ENCODE measurements at regions of chr18 and their contacts with region 1.

Region 1: DNA sequence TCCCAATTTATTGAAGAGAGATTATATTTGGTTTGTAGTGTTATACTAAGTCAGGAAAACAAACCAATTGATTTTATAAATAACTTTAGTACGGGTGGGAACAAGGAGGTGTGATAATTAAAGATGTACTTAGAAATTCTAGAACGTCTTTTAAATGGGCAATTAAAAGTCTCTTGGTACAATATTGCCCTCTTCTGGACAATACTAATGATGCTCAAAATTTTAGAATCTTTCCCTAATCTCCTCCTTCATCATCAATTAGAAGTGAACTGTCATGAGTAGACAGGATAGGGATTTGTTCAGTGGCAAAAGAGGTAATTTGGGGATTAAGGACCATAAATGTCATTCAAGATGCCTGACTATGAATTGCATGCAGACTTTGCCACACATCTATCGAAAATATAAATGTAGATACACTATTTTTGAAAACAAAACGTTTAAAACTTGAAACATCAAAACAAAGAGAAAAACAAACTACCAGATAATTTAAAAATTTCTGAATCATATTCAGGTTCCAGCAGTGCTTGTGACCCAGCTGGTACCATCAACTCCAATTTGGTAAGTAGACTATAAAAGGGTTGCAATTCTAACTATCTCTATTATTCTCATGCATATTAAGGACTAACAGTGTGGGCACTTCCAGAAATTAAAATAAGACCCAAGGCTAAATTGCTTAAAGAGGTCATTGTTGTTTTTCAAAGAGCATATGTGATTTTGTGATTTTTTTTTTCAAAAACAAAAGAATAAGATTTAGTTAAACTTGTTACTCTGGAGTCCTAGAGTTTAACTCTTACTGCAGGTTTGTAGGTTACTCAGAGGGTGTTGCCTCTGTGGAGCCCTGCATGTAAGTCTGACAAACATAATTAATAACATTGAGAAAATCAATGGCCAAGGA is 123.5 kb downstream of the LAMA3 start:
- DNase-seq: peak; percentile 15
- ATAC-seq: peak; percentile 57
- H3K4me3 ChIP-seq: no peak overlapping the region
- H3K27ac ChIP-seq: no peak overlapping the region
- H3K4me1 ChIP-seq: no peaks in the 10 kb centered on the region
- H3K27me3 ChIP-seq: no peaks in the 10 kb centered on the region
- CTCF ChIP-seq: peak; percentile 33 to 65 (median 58); a peak in 5 of 6 replicates
- POLR2A ChIP-seq: no peak
- RAD21 ChIP-seq: peak; percentile 76

Region 2: DNA sequence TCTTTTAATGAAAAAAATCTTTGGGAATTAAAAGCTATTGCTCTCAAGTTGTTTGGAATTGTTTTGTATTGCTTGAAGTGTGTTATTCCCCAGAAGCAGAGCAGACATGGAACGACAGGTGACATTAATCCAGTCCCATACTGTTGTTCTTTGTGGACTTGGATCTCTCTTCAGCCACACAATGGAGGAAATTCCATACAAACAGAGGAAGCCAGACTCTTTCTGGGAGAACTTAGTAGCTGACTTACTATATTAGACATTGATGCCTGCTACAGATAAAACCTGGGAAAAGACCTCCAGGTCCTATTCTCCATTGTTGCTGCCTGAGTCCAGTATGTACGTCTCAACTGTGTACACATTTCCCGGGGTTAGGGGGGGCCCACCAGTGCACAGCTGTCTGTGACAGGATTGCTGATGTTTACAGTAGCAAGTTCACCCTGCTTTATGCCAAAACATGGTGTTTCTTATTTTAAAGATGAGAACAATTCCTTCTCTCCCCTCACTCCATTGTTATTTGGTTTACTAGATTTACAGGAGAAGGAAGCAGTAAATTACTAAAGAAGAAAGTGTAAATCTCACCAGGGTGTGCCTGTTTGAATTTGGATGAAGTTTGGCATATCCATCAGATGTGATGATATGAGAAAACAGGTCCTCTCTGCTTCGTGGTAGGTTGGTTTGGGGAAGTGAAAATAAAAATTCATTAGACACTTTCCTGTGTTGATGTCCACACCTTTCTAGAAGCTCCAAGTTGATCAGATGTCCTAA is 1022.1 kb before region 1 on chr18:
- CTCF ChIA-PET with region 1: no interaction called
- POLR2A ChIA-PET with region 1: no interaction called
- RAD21 ChIA-PET with region 1: no interaction called
- intact Hi-C with region 1: loop called (anchors 10 kb)
- DNase-seq: no peak
- ATAC-seq: no peak
- H3K4me3 ChIP-seq: no peak overlapping the region
- H3K27ac ChIP-seq: no peak overlapping the region
- H3K4me1 ChIP-seq: no peaks in the 10 kb centered on the region
- H3K27me3 ChIP-seq: no peaks in the 10 kb centered on the region
- CTCF ChIP-seq: no peak
- POLR2A ChIP-seq: no peak
- RAD21 ChIP-seq: no peak

Region 3: DNA sequence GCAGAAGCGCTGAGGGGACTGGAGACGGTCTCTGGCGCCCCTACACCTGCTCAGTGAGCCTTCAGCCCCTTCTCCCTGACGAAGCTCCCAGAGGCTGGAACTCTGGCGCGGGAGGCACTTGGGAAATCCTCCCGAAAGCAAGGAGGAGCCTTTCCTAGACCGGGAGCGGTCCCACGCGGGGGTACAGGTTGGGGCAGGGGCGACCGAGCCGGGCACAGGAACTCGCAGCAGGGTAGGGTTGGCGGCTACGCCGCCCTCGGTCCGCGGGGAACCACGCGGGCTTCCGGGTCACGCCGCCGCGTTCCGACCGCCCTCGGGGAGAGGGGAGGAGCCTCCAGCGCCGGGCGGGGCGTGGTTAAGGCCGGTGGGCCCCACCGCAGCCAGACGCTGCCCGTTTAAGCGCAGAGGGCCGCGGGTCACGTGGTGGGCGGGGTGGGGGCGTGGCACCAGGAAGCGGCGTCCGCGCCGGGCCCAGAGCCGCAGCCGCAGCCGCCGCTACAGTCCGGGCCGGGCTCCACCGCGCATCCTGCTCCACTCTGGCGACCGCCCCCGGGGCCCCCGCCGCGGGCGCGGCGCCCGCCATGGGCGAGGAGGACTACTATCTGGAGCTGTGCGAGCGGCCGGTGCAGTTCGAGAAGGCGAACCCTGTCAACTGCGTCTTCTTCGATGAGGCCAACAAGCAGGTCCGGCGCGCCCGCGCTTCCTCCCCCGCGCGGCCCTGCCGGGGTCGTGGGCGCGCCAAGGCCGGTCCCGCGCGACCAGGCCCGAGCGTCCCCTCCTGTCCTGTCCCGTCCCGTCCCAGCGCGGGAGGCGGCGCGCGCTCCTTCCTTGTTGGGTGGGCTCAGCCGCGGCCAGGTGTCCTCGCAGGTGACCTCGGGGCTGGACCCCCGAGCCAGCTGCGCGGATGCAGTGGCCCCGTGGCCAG is 309.5 kb before region 1 on chr18 and contains the start of gene RMC1:
- CTCF ChIA-PET with region 1: no interaction called
- POLR2A ChIA-PET with region 1: no interaction called
- RAD21 ChIA-PET with region 1: no interaction called
- intact Hi-C with region 1: loop called (anchors 1 kb)
- DNase-seq: peak; percentile 81
- ATAC-seq: peak; percentile 85
- H3K4me3 ChIP-seq: peak within 1 kb of the TSS; percentile 79 to 92
- H3K27ac ChIP-seq: peak within 1 kb of the TSS; percentile 70
- H3K4me1 ChIP-seq: peaks cover 10 to 33% of the 10 kb centered on the region in 2 experiments; a peak in 3 of 4 replicates
- H3K27me3 ChIP-seq: no peaks in the 10 kb centered on the region
- CTCF ChIP-seq: no peak
- POLR2A ChIP-seq: peak; percentile 76
- RAD21 ChIP-seq: peak; percentile 23; the same call in 1 of the 2 replicates
- total RNA-seq, gene RMC1: 38.4 TPM

Region 4: GRCh38 chr18:23515911-23516546 is 296.8 kb before region 1 on chr18:
- CTCF ChIA-PET with region 1: no interaction called
- POLR2A ChIA-PET with region 1: no interaction called
- RAD21 ChIA-PET with region 1: no interaction called
- intact Hi-C with region 1: loop called (anchors 5 kb)
- DNase-seq: peak; percentile 57
- ATAC-seq: peak; percentile 100
- H3K4me3 ChIP-seq: no peak overlapping the region
- H3K27ac ChIP-seq: no peak overlapping the region
- H3K4me1 ChIP-seq: 0 out of 4 replicates have a peak, but pooled peaks cover 0 to 2% of the 10 kb centered on the region in 2 experiments
- H3K27me3 ChIP-seq: no peaks in the 10 kb centered on the region
- CTCF ChIP-seq: peak; percentile 72 to 96 (median 96); a peak in 5 of 6 replicates
- POLR2A ChIP-seq: no peak
- RAD21 ChIP-seq: peak; percentile 78

Region 5: GRCh38 chr18:23619388-23619881 is 193.4 kb before region 1 on chr18:
- CTCF ChIA-PET with region 1: interaction called, 8 read pairs
- POLR2A ChIA-PET with region 1: no interaction called
- RAD21 ChIA-PET with region 1: no interaction called
- intact Hi-C with region 1: loop called (anchors 1 kb)
- DNase-seq: no peak
- ATAC-seq: no peak
- H3K4me3 ChIP-seq: no peak overlapping the region
- H3K27ac ChIP-seq: no peak overlapping the region
- H3K4me1 ChIP-seq: no peaks in the 10 kb centered on the region
- H3K27me3 ChIP-seq: no peaks in the 10 kb centered on the region
- CTCF ChIP-seq: no peak
- POLR2A ChIP-seq: no peak
- RAD21 ChIP-seq: no peak

Region 6: GRCh38 chr18:23833714-23834113 is 20.9 kb after region 1 on chr18:
- CTCF ChIA-PET with region 1: no interaction called
- POLR2A ChIA-PET with region 1: no interaction called
- RAD21 ChIA-PET with region 1: no interaction called
- intact Hi-C with region 1: loop called (anchors 2 kb)
- DNase-seq: no peak
- ATAC-seq: no peak
- H3K4me3 ChIP-seq: no peak overlapping the region
- H3K27ac ChIP-seq: no peak overlapping the region
- H3K4me1 ChIP-seq: peaks cover 1 to 7% of the 10 kb centered on the region in 2 experiments; a peak in 3 of 4 replicates
- H3K27me3 ChIP-seq: no peaks in the 10 kb centered on the region
- CTCF ChIP-seq: no peak
- POLR2A ChIP-seq: no peak
- RAD21 ChIP-seq: no peak

Region 7: DNA sequence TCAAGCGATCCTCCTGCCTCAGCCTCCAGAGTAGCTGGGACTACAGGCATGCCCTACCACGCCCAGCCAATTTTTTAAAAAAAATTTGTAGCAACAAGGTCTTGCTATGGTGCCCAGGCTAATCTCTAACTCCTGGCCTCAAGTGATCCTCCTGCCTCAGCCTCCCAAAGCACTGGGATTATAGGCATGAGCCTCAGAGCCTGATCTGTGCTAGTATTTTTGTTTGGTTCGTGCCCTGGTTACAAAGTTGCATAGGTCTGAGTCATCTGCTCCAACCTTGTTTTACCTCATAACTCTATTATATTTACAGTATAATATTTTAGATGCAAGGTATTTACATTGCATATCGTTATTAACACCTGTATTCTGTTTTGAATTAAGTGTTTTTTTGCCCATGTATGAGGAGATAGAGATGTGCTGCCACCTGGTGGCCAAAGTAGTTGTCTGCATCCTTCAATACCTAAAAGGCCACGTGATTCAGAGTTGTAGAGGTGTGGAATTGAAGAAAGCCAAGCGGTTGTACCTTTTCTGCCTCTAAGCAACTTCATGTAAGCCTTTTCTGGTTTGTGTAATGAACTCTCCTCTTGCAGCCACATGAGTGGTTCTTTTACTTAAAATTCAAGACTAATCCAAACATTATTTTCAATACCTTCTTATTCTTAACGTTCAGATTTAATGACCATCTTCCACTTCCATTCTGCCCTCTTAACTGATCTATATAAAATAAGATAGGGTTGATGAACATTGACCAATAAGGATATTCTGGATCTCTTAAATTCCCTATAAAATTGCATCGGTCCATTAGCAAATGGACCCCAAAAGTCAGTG is 306.2 kb after region 1 on chr18:
- CTCF ChIA-PET with region 1: no interaction called
- POLR2A ChIA-PET with region 1: no interaction called
- RAD21 ChIA-PET with region 1: no interaction called
- intact Hi-C with region 1: loop called (anchors 1 kb)
- DNase-seq: peak; percentile 63
- ATAC-seq: peak; percentile 84
- H3K4me3 ChIP-seq: no peak overlapping the region
- H3K27ac ChIP-seq: no peak overlapping the region
- H3K4me1 ChIP-seq: peaks cover under 1% of the 10 kb centered on the region in 2 experiments; a peak in 3 of 4 replicates
- H3K27me3 ChIP-seq: no peaks in the 10 kb centered on the region
- CTCF ChIP-seq: peak; percentile 73 to 80 (median 76)
- POLR2A ChIP-seq: no peak
- RAD21 ChIP-seq: peak; percentile 90

Measured in HCT116 (cell line).